K562 (cell line): ENCODE measurements at regions of chr3 and their contacts with region 1.

Region 1: DNA sequence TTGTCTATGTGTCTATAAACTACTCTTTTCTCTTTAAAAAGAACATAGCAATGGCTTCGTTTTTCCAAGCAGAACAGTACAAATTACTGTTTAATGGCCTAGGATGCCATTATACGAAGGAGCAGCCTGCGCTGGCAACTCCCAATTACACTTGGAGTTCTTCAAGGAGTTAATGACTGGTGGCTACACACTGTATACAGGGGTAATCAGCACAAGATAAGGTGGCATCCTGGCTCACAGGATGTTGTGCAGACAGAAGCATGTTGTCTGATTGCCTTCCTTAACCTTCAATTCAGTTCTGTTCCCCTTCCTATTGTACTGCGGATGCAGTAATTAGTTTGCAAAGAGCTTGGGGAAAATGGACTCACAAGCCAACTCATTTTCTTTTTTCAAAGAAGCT is 250.7 kb upstream of the ROBO2 start:
- DNase-seq: no peak
- ATAC-seq: no peak
- H3K4me3 ChIP-seq: no peak overlapping the region
- H3K27ac ChIP-seq: no peak overlapping the region
- H3K4me1 ChIP-seq: no peaks in the 10 kb centered on the region
- H3K27me3 ChIP-seq: no peaks in the 10 kb centered on the region
- CTCF ChIP-seq: no peak
- EP300 ChIP-seq: no peak
- POLR2A ChIP-seq: no peak
- RAD21 ChIP-seq: no peak

Region 2: DNA sequence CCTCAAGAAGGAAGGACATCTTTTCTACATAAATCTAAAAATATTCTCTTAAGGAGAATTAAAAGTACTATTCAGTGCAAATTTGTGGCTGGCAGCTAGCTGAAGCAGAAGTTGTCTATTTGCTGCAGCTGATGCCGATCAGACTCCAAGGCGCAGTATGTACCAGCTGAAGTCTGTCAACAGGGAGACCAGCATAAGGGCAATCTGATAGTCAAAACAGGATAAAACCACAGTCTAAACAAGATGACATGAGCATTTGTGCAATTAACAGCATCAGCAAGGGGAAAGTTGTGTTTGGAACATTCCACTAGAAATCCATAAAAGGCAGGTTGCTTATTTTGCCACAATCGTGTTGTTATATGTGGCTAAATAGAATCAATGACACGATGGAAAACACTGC is 52.5 kb after region 1 on chr3:
- CTCF ChIA-PET with region 1: no interaction called
- POLR2A ChIA-PET with region 1: no interaction called
- in situ Hi-C with region 1: no loop called
- intact Hi-C with region 1: loop called (anchors 10 kb)
- DNase-seq: no peak
- ATAC-seq: no peak
- H3K4me3 ChIP-seq: no peak overlapping the region
- H3K27ac ChIP-seq: no peak overlapping the region
- H3K4me1 ChIP-seq: no peaks in the 10 kb centered on the region
- H3K27me3 ChIP-seq: no peaks in the 10 kb centered on the region
- CTCF ChIP-seq: no peak
- EP300 ChIP-seq: no peak
- POLR2A ChIP-seq: no peak
- RAD21 ChIP-seq: no peak

Region 3: GRCh38 chr3:76888856-76889255 is 99.6 kb after region 1 on chr3:
- CTCF ChIA-PET with region 1: no interaction called
- POLR2A ChIA-PET with region 1: no interaction called
- in situ Hi-C with region 1: no loop called
- intact Hi-C with region 1: no loop called
- DNase-seq: no peak
- ATAC-seq: no peak
- H3K4me3 ChIP-seq: no peak overlapping the region
- H3K27ac ChIP-seq: no peak overlapping the region
- H3K4me1 ChIP-seq: no peaks in the 10 kb centered on the region
- H3K27me3 ChIP-seq: no peaks in the 10 kb centered on the region
- CTCF ChIP-seq: no peak
- EP300 ChIP-seq: no peak
- POLR2A ChIP-seq: no peak
- RAD21 ChIP-seq: no peak